ENCODE measurements at regions of chr17 and their contacts with region 1.

Region 1: DNA sequence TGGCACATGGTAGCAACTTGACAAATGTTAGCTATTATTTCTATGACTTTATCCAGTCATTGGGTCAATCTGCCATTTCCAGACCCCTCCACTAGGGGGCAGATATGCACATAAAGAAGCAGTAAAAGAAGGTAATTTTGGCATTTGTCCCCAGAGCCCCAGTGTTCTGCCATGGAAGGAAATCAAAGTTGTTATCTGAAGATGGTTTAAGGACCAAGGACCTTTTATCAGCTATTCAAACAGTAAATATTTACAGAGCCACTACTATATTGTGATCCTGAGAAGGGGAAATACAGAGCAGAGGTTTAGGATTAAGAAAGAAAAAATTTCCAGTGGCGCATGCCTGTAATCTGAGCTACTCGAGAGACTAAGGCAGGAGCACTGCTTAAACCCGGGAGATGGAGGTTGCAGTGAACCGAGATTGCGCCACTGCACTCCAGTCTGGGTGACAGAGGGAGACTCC is 20.0 kb downstream of the TRAF4 start:
- DNase-seq: peak; percentile 65 to 85 (median 74)
- ATAC-seq: peak in 1 of 2 donors; percentile 21
- H3K4me3 ChIP-seq: no peak overlapping the region
- H3K27ac ChIP-seq: no peak overlapping the region
- H3K4me1 ChIP-seq: peaks cover 2% of the 10 kb centered on the region
- H3K27me3 ChIP-seq: no peaks in the 10 kb centered on the region

Region 2: GRCh38 chr17:28701987-28702751 is 61.7 kb before region 1 on chr17:
- intact Hi-C with region 1: no loop called
- DNase-seq: no peak
- ATAC-seq: no peak
- H3K4me3 ChIP-seq: no peak overlapping the region
- H3K27ac ChIP-seq: no peak overlapping the region
- H3K4me1 ChIP-seq: no peaks in the 10 kb centered on the region
- H3K27me3 ChIP-seq: no peaks in the 10 kb centered on the region

Region 3: DNA sequence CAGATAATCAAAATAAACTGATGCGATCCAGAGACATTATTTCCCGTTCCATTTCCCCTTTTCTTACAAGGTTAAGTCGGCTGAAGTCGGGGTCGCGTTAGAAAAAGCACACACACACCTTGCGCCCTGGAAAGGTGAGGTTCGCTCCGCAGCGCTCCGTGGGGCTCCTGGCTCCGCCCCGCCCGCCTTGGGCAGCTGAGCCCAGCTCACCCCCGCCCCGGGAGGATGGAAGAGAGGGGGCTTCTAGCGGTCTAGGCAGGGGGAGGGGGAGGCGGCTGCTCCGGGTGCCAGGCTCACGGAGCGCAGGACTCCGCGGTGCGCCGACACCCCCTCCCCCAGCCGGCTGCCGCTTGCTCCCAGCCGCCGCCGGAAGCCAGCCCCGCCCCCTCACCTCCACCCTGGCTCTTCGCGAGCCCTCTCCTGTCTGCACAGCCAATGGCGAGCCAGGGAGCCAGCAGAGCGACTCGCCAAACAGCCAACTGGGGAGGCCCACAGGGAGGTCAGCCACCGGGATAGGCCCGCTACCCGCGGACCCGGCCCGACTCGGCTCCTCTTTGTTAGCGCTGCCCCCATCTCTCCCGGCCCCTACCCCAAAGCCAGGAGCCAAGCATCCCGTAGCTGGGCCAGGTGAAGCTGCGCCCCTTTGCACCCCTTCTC is 48.4 kb after region 1 on chr17:
- intact Hi-C with region 1: loop called in 1 of 4 experiments (anchors 10 kb)
- DNase-seq: peak; percentile 98 to 99 (median 99)
- ATAC-seq: peak; percentile 100
- H3K4me3 ChIP-seq: peak overlapping the region; percentile 75
- H3K27ac ChIP-seq: peak overlapping the region; percentile 95
- H3K4me1 ChIP-seq: no peaks in the 10 kb centered on the region
- H3K27me3 ChIP-seq: no peaks in the 10 kb centered on the region

Region 4: DNA sequence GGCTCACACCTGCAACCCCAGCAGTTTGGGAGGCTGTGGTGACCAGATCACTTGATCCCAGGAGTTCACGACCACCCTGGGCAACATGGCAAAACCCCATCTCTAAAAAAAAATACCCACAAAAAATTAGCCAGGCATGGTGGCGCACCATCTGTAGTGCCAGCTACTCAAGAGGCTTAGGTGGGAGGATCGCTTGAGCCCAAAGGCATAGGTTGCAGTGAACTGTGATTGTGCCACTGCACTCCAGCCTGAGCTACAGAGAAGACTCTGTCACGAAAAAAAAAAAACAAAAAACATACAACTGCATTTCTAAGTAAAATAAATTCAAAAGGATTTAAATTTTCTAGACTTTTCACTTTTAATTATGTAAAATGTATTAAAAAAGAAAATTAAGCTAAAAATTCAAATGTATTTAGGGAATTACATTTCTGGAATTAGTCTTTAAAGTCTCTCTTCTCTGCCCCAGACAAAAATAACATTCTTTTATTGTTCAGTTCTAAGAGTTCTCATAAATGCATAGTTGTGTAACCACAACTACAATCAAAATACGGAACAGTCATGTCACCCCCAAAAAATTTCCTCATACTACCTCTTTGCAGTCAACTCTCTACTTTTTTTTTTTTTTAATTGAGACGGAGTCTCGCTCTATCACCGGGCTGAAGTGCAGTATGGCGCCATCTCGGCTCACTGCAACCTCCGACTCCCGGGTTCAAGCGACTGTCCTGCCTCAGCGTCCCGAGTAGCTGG is 64.6 kb after region 1 on chr17:
- intact Hi-C with region 1: no loop called
- DNase-seq: no peak
- ATAC-seq: no peak
- H3K4me3 ChIP-seq: no peak overlapping the region
- H3K27ac ChIP-seq: no peak overlapping the region
- H3K4me1 ChIP-seq: no peaks in the 10 kb centered on the region
- H3K27me3 ChIP-seq: no peaks in the 10 kb centered on the region

Region 5: GRCh38 chr17:28896884-28897768 is 133.3 kb after region 1 on chr17 and contains the start of gene FLOT2:
- intact Hi-C with region 1: loop called in 1 of 4 experiments (anchors 10 kb)
- DNase-seq: peak; percentile 71 to 86 (median 84)
- ATAC-seq: peak; percentile 79 to 81
- H3K4me3 ChIP-seq: peak within 1 kb of the TSS; percentile 66
- H3K27ac ChIP-seq: peak within 1 kb of the TSS; percentile 71
- H3K4me1 ChIP-seq: peaks cover 9% of the 10 kb centered on the region
- H3K27me3 ChIP-seq: no peaks in the 10 kb centered on the region
- total RNA-seq, gene FLOT2: 70.5 to 89.4 (median 79.4) TPM

Region 6: DNA sequence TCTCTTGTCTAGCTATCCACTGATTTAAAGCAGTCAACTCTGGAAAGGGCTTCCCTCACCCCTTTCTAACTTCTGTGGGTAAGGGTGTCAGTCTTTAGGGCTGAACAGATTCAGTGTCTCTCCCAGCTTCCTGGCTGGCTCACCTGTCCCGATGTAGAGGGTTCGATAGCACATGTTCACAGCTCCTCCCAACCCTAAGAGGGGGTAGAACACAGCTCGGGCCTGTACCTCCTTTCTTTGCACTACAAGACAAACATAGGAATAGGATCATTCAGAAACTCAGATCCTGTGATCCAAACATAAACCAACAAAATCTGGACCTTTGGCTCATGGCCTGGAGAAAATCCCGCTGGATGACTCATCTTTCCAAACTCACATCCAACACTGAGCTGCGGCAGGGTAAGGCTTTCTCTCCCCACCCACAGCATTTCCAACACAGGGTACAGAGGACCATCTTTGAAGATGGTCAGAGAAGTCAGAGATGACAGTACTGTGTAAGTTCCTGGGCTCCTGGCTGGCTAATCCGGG is 144.9 kb after region 1 on chr17:
- intact Hi-C with region 1: loop called in 2 of 4 experiments (anchors 5 to 10 kb)
- DNase-seq: peak in 2 of 3 donors; percentile 45 to 72
- ATAC-seq: peak; percentile 58 to 73
- H3K4me3 ChIP-seq: no peak overlapping the region
- H3K27ac ChIP-seq: peak overlapping the region; percentile 53
- H3K4me1 ChIP-seq: no peaks in the 10 kb centered on the region
- H3K27me3 ChIP-seq: no peaks in the 10 kb centered on the region

Region 7: DNA sequence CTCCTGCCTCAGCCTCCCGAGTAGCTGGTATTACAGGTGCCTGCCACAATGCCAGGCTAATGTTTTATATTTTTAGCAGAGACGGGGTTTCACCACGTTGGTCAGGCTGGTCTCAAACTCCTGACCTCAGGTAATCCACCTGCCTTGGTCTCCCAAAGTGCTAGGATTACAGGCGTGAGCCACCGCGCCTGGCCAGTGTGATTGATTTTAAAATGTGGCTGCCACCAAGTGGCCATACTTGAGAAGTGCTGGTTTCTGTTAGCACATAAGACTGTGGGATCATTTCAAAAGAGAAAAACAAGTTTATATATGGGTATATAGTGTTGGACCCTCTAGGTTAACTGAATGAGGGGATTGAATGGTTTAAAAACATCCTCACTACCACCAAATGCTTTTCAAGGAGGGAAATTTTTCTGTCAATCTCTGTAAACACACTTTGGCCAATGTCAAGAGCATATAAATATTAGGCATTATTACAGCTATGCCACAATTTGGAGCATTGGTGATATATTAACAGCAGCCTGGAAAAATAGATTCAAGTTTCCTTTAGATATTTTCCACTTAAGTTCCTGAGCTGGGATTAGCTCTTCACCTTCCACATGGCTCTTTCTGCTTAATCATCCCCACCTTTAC is 152.6 kb after region 1 on chr17:
- intact Hi-C with region 1: loop called in 2 of 4 experiments (anchors 5 to 10 kb)
- DNase-seq: peak in 1 of 3 donors; percentile 77
- ATAC-seq: peak; percentile 44 to 54
- H3K4me3 ChIP-seq: no peak overlapping the region
- H3K27ac ChIP-seq: no peak overlapping the region
- H3K4me1 ChIP-seq: no peaks in the 10 kb centered on the region
- H3K27me3 ChIP-seq: no peaks in the 10 kb centered on the region

Measured in right cardiac atrium (tissue), 5 donors.